Left cardiac atrium (tissue), 4 donors: ENCODE measurements at regions of chr2 and their contacts with region 1.

Region 1: DNA sequence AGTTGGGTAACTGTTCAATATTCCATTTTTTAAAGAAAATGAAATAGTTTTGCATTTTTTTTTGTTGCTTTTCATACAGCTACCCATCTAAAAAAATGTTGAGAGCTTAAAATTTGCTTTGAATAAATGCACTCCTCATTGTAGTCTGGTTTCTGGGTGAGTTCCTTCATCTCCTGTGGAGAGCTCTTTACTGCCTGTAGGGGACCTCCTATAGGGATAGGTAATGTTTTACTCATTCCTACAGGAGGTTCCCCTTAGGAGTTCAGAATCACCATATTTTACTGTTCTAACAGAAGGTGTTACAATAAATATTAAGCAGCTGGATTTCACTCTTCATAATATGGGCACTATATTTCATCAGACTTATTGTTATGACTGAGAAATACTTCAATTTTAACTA is 947.3 kb upstream of the CRIM1 start:
- DNase-seq: no peak
- ATAC-seq: no peak

Region 2: DNA sequence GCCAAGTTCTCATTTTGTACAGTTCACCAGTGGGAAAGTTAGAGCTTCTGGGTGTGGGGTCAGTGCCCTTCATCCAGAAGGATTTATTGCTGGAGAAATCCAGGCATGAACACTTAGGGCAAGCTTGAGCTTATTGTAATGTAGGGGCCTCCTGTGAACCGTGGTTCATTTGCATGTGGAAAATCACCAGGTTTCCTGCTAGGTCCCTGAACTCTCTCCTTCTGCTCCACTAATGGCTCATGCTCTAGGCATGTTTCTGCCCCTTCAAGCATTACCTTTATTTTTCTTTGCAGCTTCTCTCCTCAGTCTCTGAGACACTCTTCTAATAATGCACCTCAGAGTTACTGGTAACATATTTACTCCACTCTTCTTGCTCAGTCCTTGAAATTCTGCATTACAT is 1729.9 kb before region 1 on chr2:
- intact Hi-C with region 1: loop called in 1 of 2 experiments (anchors 5 kb)
- DNase-seq: no peak
- ATAC-seq: no peak

Region 3: GRCh38 chr2:34012715-34013302 is 1395.5 kb before region 1 on chr2:
- intact Hi-C with region 1: loop called in 1 of 2 experiments (anchors 5 kb)
- DNase-seq: peak; percentile 50
- ATAC-seq: peak in 1 of 2 donors; percentile 67

Region 4: DNA sequence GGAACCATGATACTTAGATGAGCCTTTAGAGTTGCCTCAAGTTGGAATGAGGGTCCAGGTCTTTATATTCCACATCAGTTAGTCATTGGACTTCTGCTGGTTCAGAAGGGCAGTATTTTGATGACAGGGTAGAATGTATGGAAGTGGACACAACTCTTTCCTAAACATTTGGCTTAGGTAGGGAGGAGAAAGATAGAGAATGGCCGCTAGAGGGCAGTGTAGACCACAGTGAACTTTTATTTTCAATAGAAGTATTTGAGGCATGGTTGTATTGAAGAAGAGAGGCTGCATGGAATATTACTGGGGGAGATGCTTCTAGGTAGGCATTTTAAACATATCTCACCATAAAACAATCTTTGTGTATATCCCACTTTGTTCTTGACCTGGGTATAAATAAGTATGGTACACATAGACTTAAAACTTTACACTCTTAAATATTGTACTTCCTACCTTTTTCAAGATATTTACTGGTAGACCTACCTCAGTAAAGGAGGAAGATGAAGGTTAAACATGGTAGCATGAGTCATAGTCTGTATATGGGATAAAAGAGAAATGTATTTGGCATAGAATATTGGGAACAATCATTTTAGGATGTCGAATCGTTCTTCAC is 1311.7 kb before region 1 on chr2:
- intact Hi-C with region 1: loop called in 1 of 2 experiments (anchors 5 kb)
- DNase-seq: peak; percentile 37
- ATAC-seq: peak; percentile 41 to 44

Region 5: DNA sequence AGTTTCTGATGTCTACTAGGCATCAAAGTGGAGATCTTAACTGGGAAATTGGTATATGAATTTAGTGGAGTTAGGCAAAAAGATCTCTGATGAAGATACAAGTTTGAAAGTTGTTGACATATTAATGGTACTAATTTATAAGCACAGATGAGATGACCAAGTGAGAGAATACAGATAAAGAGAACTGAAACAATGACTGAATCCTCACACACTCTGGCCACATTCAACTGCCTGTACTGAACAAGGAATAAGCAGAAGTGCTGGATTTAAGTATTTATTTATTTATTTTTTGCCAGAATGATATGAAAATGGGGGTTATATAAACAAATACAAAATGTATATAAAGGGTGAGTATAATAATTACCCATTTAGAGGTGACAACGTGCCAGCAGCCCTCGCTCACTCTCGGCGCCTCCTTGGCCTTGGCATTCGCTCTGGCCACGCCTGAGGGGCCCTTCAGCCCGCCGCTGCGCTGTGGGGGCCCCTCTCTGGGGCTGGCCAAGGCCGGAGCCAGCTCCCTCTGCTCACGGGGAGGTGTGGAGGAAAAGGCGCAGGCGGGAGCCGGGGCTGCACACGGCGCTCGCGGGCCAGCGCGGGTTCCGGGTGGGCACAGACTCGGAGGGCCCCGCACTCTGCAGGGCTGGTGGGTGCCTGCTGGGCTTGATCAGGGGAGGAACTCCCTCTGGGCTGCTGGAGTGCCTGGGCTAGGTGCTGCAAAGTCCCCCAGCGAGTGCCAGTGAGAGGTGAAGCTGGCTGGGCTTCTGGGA is 416.6 kb before region 1 on chr2:
- intact Hi-C with region 1: no loop called
- DNase-seq: no peak
- ATAC-seq: no peak

Region 6: GRCh38 chr2:35443087-35443486 is 34.8 kb after region 1 on chr2:
- intact Hi-C with region 1: no loop called
- DNase-seq: no peak
- ATAC-seq: no peak

Region 7: GRCh38 chr2:35454966-35455638 is 46.8 kb after region 1 on chr2:
- intact Hi-C with region 1: no loop called
- DNase-seq: no peak
- ATAC-seq: no peak